IMR-90 (cell line): ENCODE measurements at regions of chr18 and their contacts with region 1.

Region 1: GRCh38 chr18:36772241-36772723 is 56.5 kb downstream of the TPGS2 start:
- DNase-seq: peak; percentile 48
- ATAC-seq: peak; percentile 56
- H3K4me3 ChIP-seq: no peak overlapping the region
- H3K27ac ChIP-seq: peak overlapping the region; percentile 43; the same call in 1 of the 2 replicates
- H3K4me1 ChIP-seq: peaks cover 14% of the 10 kb centered on the region
- H3K27me3 ChIP-seq: no peaks in the 10 kb centered on the region
- CTCF ChIP-seq: no peak
- POLR2A ChIP-seq: no peak
- RAD21 ChIP-seq: no peak

Region 2: GRCh38 chr18:36856815-36857214 is 84.5 kb after region 1 on chr18:
- CTCF ChIA-PET with region 1: interaction called, 16 read pairs
- POLR2A ChIA-PET with region 1: no interaction called
- dilution Hi-C with region 1: no loop called
- in situ Hi-C with region 1: no loop called
- intact Hi-C with region 1: no loop called
- DNase-seq: no peak
- ATAC-seq: no peak
- H3K4me3 ChIP-seq: no peak overlapping the region
- H3K27ac ChIP-seq: no peak overlapping the region
- H3K4me1 ChIP-seq: no peaks in the 10 kb centered on the region
- H3K27me3 ChIP-seq: no peaks in the 10 kb centered on the region
- CTCF ChIP-seq: no peak
- POLR2A ChIP-seq: no peak
- RAD21 ChIP-seq: no peak